Tibial artery (tissue), 4 donors: ENCODE measurements at regions of chr17 and their contacts with region 1.

Region 1: GRCh38 chr17:71378036-71378435 is 742.8 kb upstream of the SOX9 start:
- DNase-seq: no peak
- H3K4me3 ChIP-seq: no peak overlapping the region
- H3K27ac ChIP-seq: no peak overlapping the region
- H3K4me1 ChIP-seq: peaks cover 0 to 9% (median 0%) of the 10 kb centered on the region in 4 donors
- H3K27me3 ChIP-seq: no peaks in the 10 kb centered on the region
- CTCF ChIP-seq: no peak

Region 2: GRCh38 chr17:71441098-71441497 is 63.1 kb after region 1 on chr17:
- intact Hi-C with region 1: loop called (anchors 10 kb)
- DNase-seq: no peak
- H3K4me3 ChIP-seq: no peak overlapping the region
- H3K27ac ChIP-seq: no peak overlapping the region
- H3K4me1 ChIP-seq: peaks cover 0 to 13% (median 4%) of the 10 kb centered on the region in 4 donors
- H3K27me3 ChIP-seq: no peaks in the 10 kb centered on the region
- CTCF ChIP-seq: no peak

Region 3: GRCh38 chr17:71572343-71572742 is 194.3 kb after region 1 on chr17:
- intact Hi-C with region 1: no loop called
- DNase-seq: no peak
- H3K4me3 ChIP-seq: no peak overlapping the region
- H3K27ac ChIP-seq: no peak overlapping the region
- H3K4me1 ChIP-seq: no peaks in the 10 kb centered on the region
- H3K27me3 ChIP-seq: no peaks in the 10 kb centered on the region
- CTCF ChIP-seq: no peak